Activated CD4-positive, alpha-beta T cell treated with anti-CD3 and anti-CD28 coated beads, Interleukin-2, amount 10 ng/mL, durations not matched to agents 24 days and 14 days (primary cell): ENCODE measurements at regions of chr12 and their contacts with region 1.

Region 1: GRCh38 chr12:89073027-89073398 is 279.3 kb downstream of the DUSP6 start:
- DNase-seq: no peak
- H3K4me3 Mint-ChIP-seq: no peak overlapping the region
- H3K27ac Mint-ChIP-seq: peak overlapping the region; percentile 31
- H3K4me1 Mint-ChIP-seq: peaks cover 20% of the 10 kb centered on the region
- H3K27me3 Mint-ChIP-seq: no peaks in the 10 kb centered on the region

Region 2: DNA sequence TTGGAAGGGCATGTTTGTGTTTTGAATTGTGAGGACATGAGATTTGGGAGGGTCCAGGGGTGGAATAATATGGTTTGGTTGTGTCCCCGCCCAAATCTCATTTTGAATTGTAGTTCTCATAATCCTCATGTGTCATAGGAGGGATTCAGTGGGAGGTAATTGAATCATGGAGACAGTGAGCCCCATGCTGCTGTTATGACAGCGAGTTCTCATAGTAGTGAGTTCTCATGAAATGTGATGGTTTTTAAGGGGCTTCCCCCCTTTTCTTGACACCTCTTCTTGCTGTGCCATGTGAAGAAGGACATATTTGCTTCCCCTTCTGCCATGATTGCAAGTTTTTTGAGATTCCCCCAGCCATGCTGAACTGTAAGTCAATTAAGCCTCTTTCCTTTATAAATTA is 19.3 kb after region 1 on chr12:
- intact Hi-C with region 1: loop called (anchors 2 kb)
- DNase-seq: no peak
- H3K4me3 Mint-ChIP-seq: no peak overlapping the region
- H3K27ac Mint-ChIP-seq: peak overlapping the region; percentile 38
- H3K4me1 Mint-ChIP-seq: peaks cover 7% of the 10 kb centered on the region
- H3K27me3 Mint-ChIP-seq: no peaks in the 10 kb centered on the region

Region 3: DNA sequence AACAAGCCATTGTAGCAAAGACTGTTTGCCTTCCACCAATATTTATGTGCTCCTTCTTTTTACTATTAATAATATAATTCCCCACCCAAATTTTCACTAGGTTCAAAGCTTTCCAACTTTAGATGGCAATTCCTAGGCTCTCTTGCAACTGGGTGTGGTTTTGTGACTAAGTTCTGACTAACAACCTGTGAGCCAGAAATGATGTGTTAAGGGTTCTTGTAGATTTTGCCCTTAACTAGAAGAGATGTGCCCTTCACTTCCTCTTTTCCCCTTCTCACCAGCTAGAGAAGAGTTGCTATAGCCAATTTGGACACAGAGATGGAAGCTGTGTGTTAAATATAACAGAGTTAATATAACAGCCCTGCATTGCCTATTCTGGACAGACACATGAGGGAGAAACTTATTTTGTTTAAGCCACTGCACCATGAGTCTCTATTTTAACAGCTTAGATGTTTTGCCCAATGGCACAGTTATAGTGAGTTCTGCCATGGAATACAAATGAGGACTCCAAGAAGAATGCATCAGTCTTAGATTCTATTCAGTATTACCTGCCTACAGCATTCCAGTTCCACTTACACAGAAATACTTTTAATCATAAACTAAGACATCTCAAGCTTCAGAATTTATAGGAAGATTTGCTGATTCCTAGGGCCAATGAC is 63.1 kb after region 1 on chr12:
- intact Hi-C with region 1: loop called (anchors 5 kb)
- DNase-seq: no peak
- H3K4me3 Mint-ChIP-seq: no peak overlapping the region
- H3K27ac Mint-ChIP-seq: no peak overlapping the region
- H3K4me1 Mint-ChIP-seq: peaks cover 19% of the 10 kb centered on the region
- H3K27me3 Mint-ChIP-seq: no peaks in the 10 kb centered on the region